ENCODE measurements at regions of chr17 and their contacts with region 1.

Region 1: GRCh38 chr17:44919885-44920564 is 4.7 kb upstream of the GFAP start:
- DNase-seq: peak; percentile 81
- ATAC-seq: peak; percentile 84
- H3K4me3 Mint-ChIP-seq: no peak overlapping the region
- H3K27ac Mint-ChIP-seq: peak overlapping the region; percentile 32; the same call in 1 of the 2 replicates
- H3K4me1 Mint-ChIP-seq: peaks cover 20% of the 10 kb centered on the region
- H3K27me3 Mint-ChIP-seq: peaks cover under 1% of the 10 kb centered on the region; the same call in 1 of the 2 replicates
- CTCF ChIP-seq: no peak; the same call in 1 of the 2 replicates

Region 2: DNA sequence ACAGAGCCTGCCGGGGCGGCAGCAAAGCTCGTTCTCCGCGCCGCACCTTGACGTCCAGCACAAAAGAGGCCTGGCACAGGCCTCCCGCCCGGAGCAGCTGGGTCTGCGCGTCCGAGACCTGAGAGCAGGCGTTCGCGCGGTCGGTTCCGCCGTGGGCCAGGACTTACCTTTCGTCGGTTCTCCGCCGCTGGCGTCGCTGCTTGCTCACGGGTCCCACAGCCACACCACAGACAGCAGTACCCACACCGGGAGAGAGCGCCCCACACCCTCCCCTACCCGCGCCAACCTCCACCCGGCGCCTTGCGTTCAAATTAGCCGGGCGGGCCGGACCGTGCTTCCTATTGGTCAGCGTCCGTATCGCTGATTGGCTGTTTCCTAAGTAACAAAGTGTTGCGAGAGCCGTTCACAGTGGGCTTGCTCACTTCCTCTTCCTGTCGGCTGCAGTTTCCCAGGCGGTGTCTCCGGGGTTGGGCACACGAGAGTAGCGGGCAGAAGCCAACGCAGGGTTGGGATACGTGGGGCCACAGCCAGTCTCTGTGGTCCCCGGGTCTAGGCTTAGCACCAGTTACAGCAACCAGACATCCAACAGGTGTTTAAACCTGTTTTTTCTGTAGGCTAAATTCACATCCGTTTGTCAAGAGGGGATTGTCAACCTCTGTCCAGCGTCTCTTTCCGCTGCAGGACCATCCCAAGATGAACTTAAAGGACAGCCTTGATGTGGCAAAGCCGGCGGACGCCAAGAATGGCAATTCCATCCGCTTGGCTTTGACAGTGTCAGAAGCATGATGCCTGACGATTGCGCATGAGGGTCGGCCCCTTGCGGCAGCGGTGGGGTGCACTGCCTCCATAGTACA is 27.7 kb after region 1 on chr17 and contains the start of gene KIF18B:
- CTCF ChIA-PET with region 1: interaction called, 33 read pairs
- POLR2A ChIA-PET with region 1: no interaction called
- DNase-seq: peak; percentile 89
- ATAC-seq: peak; percentile 95
- H3K4me3 Mint-ChIP-seq: peak within 1 kb of the TSS; percentile 95
- H3K27ac Mint-ChIP-seq: peak within 1 kb of the TSS; percentile 57; the same call in 1 of the 2 replicates
- H3K4me1 Mint-ChIP-seq: peaks cover 13% of the 10 kb centered on the region
- H3K27me3 Mint-ChIP-seq: no peaks in the 10 kb centered on the region; the same call in 1 of the 2 replicates
- CTCF ChIP-seq: no peak
- total RNA-seq, gene KIF18B: 62.2 to 82.2 TPM (median 66.3 TPM) in 3 replicates

Region 3: DNA sequence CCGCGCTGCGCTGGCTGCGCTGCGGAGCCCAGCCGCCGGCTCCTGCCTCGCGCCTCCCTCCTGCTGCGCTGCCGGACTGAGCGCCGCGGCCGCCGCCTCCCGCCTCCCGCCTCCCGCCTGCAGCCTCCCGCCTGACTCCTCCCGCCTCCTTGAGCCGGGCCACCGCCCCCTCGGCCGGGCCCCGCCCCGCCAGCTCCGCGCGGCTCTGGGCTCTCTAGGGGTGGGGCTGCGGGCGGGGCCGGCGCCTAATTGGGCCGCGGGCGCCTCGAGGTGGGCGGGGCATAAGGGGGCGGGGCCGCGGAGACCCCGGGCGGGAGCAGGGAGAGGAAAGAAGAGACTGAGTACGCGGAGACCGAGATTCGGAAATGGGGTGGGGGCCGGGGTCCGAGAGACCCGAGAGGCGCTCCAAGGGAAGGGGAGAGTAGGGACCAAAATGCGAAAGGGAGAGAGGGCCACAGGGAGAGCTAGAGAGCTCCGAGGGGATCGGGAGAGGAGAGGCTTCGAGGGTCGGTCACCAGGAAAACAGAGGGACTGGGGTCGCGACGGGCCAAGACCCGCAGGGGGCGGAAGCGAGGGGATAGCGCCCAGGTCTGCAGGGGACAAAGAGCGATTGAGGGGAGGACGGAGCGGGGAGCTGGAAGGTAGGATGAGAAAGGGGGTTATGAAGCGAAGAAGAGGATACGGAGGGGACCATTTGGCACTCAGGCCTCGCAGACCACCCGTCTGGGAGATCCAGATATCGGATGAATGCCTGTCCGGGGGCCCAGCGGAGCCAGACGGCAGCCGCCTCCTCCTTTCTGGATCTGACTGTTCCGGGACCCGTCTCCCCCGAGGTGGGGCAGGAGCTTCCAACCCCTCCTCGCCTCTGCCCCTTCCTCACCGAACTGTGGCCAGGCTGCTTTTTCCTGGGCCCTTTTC is 48.5 kb after region 1 on chr17 and contains the start of gene C1QL1:
- CTCF ChIA-PET with region 1: interaction called, 65 read pairs
- POLR2A ChIA-PET with region 1: no interaction called
- DNase-seq: peak; percentile 97
- ATAC-seq: peak; percentile 78
- H3K4me3 Mint-ChIP-seq: peak within 1 kb of the TSS; percentile 92
- H3K27ac Mint-ChIP-seq: peak within 1 kb of the TSS; percentile 87
- H3K4me1 Mint-ChIP-seq: peaks cover 36% of the 10 kb centered on the region
- H3K27me3 Mint-ChIP-seq: peaks cover 69% of the 10 kb centered on the region
- CTCF ChIP-seq: no peak
- total RNA-seq, gene C1QL1: 13.4 to 16.8 TPM (median 15.6 TPM) in 3 replicates

Region 4: DNA sequence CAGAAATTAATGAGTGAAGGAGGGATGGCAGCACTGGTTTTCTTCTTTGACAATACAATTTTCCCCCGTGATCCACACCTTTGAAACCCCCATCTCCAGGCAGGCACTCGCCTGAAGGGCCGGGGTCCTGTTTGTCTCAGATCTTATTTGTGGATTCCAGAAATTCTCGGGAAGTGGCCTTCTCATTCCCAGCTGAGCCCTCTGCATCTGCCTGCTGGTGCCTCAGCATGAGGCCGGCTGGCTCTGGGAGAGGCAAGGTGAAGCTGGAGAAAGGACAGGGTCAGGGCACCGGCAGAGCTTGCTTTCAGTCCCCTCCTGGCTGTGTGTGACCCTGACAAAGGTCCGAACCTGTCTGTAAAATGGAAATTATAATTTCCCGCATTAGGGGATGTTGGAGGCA is 83.9 kb after region 1 on chr17:
- CTCF ChIA-PET with region 1: interaction called, 13 read pairs
- POLR2A ChIA-PET with region 1: no interaction called
- DNase-seq: no peak
- ATAC-seq: peak; percentile 39
- H3K4me3 Mint-ChIP-seq: no peak overlapping the region
- H3K27ac Mint-ChIP-seq: no peak overlapping the region
- H3K4me1 Mint-ChIP-seq: peaks cover 33% of the 10 kb centered on the region
- H3K27me3 Mint-ChIP-seq: peaks cover 16% of the 10 kb centered on the region
- CTCF ChIP-seq: no peak

Region 5: DNA sequence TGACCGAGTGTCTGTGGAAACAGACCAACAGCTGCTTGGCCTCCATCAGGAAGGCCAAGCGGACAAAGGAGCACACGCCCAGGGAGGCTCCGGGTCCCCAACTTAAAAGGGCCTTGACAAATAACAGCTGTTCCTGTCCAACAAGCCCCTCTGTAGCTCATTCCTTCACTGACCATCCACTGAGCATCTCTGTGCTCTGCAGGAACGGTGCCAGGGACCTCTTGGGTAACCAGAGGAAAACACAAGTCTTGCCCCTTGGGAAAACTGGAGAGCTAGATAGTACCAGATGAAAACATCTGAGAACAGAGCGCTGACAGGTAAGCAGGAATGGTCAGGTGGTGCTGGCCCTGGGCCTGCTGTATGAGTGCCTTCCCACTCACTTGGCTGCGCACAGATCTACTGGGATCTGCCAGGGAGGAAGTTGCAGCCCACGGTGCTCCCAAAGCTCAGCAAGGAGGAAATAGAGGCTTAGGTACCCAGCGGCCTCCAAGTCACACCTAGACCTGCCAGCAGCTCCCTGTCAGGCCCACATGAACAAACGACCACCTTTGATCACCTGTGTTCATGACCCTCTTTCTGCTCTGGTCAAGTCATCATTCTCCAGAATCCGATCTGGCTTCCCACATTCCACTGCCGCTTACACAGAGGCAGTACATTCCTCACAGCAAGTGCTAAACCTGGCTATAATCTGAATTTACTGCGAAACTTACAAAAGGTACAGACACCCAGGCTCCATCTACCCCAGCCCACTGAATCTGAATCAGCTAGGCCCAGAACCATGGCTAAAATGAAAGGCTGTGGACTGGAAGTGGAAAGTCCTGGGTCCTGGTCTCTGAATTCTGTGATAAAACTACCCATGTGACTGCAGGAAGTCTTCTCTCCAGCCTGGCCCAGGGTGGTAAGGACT is 119.0 kb after region 1 on chr17:
- CTCF ChIA-PET with region 1: interaction called, 19 read pairs
- POLR2A ChIA-PET with region 1: interaction called, 3 read pairs
- DNase-seq: no peak
- ATAC-seq: no peak
- H3K4me3 Mint-ChIP-seq: no peak overlapping the region
- H3K27ac Mint-ChIP-seq: peak overlapping the region; percentile 88
- H3K4me1 Mint-ChIP-seq: peaks cover 34% of the 10 kb centered on the region
- H3K27me3 Mint-ChIP-seq: no peaks in the 10 kb centered on the region
- CTCF ChIP-seq: no peak